ENCODE measurements at regions of chr11 and their contacts with region 1.

Region 1: DNA sequence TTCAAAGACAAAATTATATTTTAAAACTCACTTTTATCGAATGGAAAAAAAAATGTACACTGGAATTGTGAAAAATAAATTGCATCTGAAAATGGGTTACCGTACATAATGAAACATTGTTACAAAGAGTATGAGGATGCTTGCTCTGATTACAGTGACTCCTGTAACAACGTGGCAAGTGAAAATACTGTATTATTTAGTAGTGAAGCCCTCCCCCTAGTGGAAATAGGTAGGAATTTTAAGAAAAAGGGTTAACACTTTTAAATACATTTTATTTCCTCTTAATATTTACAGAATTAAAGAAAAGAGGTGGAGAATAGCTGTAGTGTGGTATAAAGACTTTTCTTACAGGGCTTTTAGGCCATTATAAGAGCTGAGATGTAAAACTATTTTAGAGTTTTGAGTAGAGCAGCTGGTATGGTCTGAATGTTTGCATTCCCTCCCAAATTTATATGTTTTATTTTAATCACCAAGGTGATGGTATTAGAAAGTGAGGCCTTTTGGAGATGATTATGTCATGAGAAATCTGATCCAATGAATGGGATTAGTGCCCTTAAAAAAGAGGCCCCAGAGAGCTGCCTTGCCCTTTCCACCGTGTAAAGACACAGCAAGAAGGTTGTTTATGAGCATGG is 25.2 kb downstream of the FAM76B start:
- DNase-seq: peak in 2 of 9 experiments; percentile 61 to 73
- ATAC-seq: peak; percentile 86
- H3K4me3 ChIP-seq: no peak overlapping the region
- H3K4me3 Mint-ChIP-seq: no peak overlapping the region
- H3K27ac ChIP-seq: no peak overlapping the region
- H3K27ac Mint-ChIP-seq: no peak overlapping the region
- H3K4me1 ChIP-seq: no peaks in the 10 kb centered on the region
- H3K4me1 Mint-ChIP-seq: no peaks in the 10 kb centered on the region
- H3K27me3 ChIP-seq: peaks cover 0 to 2% of the 10 kb centered on the region in 2 experiments
- H3K27me3 Mint-ChIP-seq: peaks cover 5% of the 10 kb centered on the region
- CTCF ChIP-seq: peak; percentile 88

Region 2: GRCh38 chr11:94519478-94520084 is 1244.8 kb before region 1 on chr11:
- CTCF ChIA-PET with region 1: interaction called, 3 read pairs
- POLR2A ChIA-PET with region 1: no interaction called
- intact Hi-C with region 1: loop called in 1 of 2 experiments (anchors 5 kb)
- DNase-seq: peak in 3 of 9 experiments; percentile 12 to 56 (median 45)
- ATAC-seq: peak; percentile 49
- H3K4me3 ChIP-seq: no peak overlapping the region
- H3K4me3 Mint-ChIP-seq: no peak overlapping the region
- H3K27ac ChIP-seq: no peak overlapping the region
- H3K27ac Mint-ChIP-seq: no peak overlapping the region
- H3K4me1 ChIP-seq: no peaks in the 10 kb centered on the region
- H3K4me1 Mint-ChIP-seq: no peaks in the 10 kb centered on the region
- H3K27me3 ChIP-seq: no peaks in the 10 kb centered on the region
- H3K27me3 Mint-ChIP-seq: peaks cover 9% of the 10 kb centered on the region
- CTCF ChIP-seq: peak; percentile 72

Region 3: DNA sequence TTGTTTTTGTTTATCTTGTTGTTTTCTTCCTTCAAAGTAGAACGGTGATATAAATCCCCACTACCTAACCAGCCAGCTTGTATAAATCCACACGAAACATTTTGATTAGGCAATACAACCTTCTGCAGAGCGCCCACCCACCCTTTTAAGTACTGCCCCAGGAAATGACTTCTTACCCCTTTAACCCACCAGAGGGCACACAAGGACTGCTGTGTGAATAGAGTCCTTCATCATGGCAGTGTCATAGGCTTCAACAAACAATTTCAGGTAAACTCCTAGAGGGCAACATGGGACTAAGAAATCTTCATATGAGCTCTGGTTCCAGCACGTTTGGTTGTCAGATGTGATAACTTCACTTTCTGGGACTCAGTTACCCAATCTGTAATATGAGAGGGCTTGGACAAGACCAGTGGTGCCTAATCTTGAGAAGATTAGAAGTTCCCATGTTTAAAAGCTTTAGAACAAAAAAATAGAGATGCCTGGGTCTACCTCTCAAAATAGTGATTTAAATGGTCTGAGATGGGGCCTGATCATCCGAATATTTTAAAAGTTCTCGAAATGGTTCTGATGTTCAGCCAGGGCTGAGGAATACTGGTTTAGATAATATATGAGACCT is 1141.2 kb before region 1 on chr11:
- CTCF ChIA-PET with region 1: no interaction called
- POLR2A ChIA-PET with region 1: no interaction called
- intact Hi-C with region 1: loop called in 1 of 2 experiments (anchors 2 kb)
- DNase-seq: peak in 6 of 9 experiments; percentile 19 to 67 (median 30)
- ATAC-seq: peak; percentile 68
- H3K4me3 ChIP-seq: no peak overlapping the region
- H3K4me3 Mint-ChIP-seq: no peak overlapping the region
- H3K27ac ChIP-seq: no peak overlapping the region
- H3K27ac Mint-ChIP-seq: no peak overlapping the region
- H3K4me1 ChIP-seq: no peaks in the 10 kb centered on the region
- H3K4me1 Mint-ChIP-seq: peaks cover 3% of the 10 kb centered on the region
- H3K27me3 ChIP-seq: no peaks in the 10 kb centered on the region
- H3K27me3 Mint-ChIP-seq: peaks cover 11% of the 10 kb centered on the region
- CTCF ChIP-seq: peak; percentile 41

Region 4: GRCh38 chr11:94786264-94787126 is 977.9 kb before region 1 on chr11:
- CTCF ChIA-PET with region 1: no interaction called
- POLR2A ChIA-PET with region 1: no interaction called
- intact Hi-C with region 1: loop called (anchors 5 to 10 kb)
- DNase-seq: peak in 2 of 9 experiments; percentile 28 to 53
- ATAC-seq: peak; percentile 38
- H3K4me3 ChIP-seq: no peak overlapping the region
- H3K4me3 Mint-ChIP-seq: no peak overlapping the region
- H3K27ac ChIP-seq: no peak overlapping the region
- H3K27ac Mint-ChIP-seq: no peak overlapping the region
- H3K4me1 ChIP-seq: no peaks in the 10 kb centered on the region
- H3K4me1 Mint-ChIP-seq: no peaks in the 10 kb centered on the region
- H3K27me3 ChIP-seq: no peaks in the 10 kb centered on the region
- H3K27me3 Mint-ChIP-seq: peaks cover 6% of the 10 kb centered on the region
- CTCF ChIP-seq: peak; percentile 60

Measured in CD8-positive, alpha-beta T cell (primary cell).